IMR-90 (cell line): ENCODE measurements at regions of chr9 and their contacts with region 1.

Region 1: GRCh38 chr9:4979239-4979638 is 5.8 kb upstream of the JAK2 start:
- DNase-seq: peak; percentile 53
- ATAC-seq: peak; percentile 53
- H3K4me3 ChIP-seq: no peak overlapping the region
- H3K27ac ChIP-seq: no peak overlapping the region
- H3K4me1 ChIP-seq: 0 out of 2 replicates have a peak, but pooled peaks cover 2% of the 10 kb centered on the region
- H3K27me3 ChIP-seq: peaks cover 3% of the 10 kb centered on the region; the same call in 1 of the 2 replicates
- CTCF ChIP-seq: no peak
- POLR2A ChIP-seq: no peak
- RAD21 ChIP-seq: no peak

Region 2: GRCh38 chr9:4964540-4964939 is 14.7 kb before region 1 on chr9:
- CTCF ChIA-PET with region 1: no interaction called
- POLR2A ChIA-PET with region 1: no interaction called
- dilution Hi-C with region 1: no loop called
- in situ Hi-C with region 1: no loop called
- intact Hi-C with region 1: loop called (anchors 2 kb)
- DNase-seq: no peak
- ATAC-seq: peak; percentile 62; the same call in 1 of the 2 replicates
- H3K4me3 ChIP-seq: no peak overlapping the region
- H3K27ac ChIP-seq: no peak overlapping the region
- H3K4me1 ChIP-seq: no peaks in the 10 kb centered on the region
- H3K27me3 ChIP-seq: no peaks in the 10 kb centered on the region
- CTCF ChIP-seq: no peak
- POLR2A ChIP-seq: no peak
- RAD21 ChIP-seq: no peak

Region 3: DNA sequence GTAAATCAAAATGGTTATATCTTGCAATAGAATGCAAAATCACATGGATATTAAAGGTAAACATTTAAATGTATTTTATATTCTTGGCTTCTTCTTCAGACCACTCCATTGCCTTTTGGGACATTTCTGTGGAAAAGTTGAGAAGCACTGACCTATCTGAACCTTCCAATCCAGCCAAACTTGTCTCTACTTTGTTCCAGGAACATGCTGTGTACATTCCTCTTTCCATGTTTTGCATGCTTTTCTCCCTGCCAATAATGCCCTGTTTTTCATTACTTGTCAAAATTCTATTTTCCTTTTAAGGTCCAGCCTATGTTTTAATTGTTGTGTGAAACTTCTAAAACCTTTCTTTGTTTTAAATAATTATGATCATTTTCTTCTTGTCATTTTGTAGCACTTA is 34.1 kb after region 1 on chr9:
- CTCF ChIA-PET with region 1: no interaction called
- POLR2A ChIA-PET with region 1: no interaction called
- dilution Hi-C with region 1: no loop called
- in situ Hi-C with region 1: no loop called
- intact Hi-C with region 1: no loop called
- DNase-seq: no peak
- ATAC-seq: no peak
- H3K4me3 ChIP-seq: no peak overlapping the region
- H3K27ac ChIP-seq: no peak overlapping the region
- H3K4me1 ChIP-seq: no peaks in the 10 kb centered on the region
- H3K27me3 ChIP-seq: no peaks in the 10 kb centered on the region
- CTCF ChIP-seq: no peak
- POLR2A ChIP-seq: no peak
- RAD21 ChIP-seq: no peak